ENCODE measurements at regions of chr12 and their contacts with region 1.

Region 1: GRCh38 chr12:57846577-57847319 is at the start of gene CTDSP2:
- DNase-seq: peak; percentile 94
- ATAC-seq: peak; percentile 43
- H3K4me3 Mint-ChIP-seq: peak within 1 kb of the TSS; percentile 78
- H3K27ac Mint-ChIP-seq: peak within 1 kb of the TSS; percentile 70
- H3K4me1 Mint-ChIP-seq: peaks cover 44% of the 10 kb centered on the region
- H3K27me3 Mint-ChIP-seq: peaks cover 5% of the 10 kb centered on the region
- total RNA-seq, gene CTDSP2: 80.9 to 85.4 TPM

Region 2: GRCh38 chr12:57782608-57783465 is 63.9 kb before region 1 on chr12 and contains the start of gene TSFM:
- CTCF ChIA-PET with region 1: interaction called, 7 read pairs
- POLR2A ChIA-PET with region 1: no interaction called
- intact Hi-C with region 1: loop called (anchors 1 to 5 kb)
- DNase-seq: peak; percentile 99
- ATAC-seq: peak; percentile 93
- H3K4me3 Mint-ChIP-seq: peak within 1 kb of the TSS; percentile 98
- H3K27ac Mint-ChIP-seq: peak within 1 kb of the TSS; percentile 98
- H3K4me1 Mint-ChIP-seq: peaks cover 35% of the 10 kb centered on the region
- H3K27me3 Mint-ChIP-seq: no peaks in the 10 kb centered on the region
- total RNA-seq, gene TSFM: 30.7 to 56.9 TPM

Region 3: GRCh38 chr12:57865090-57865751 is 18.5 kb after region 1 on chr12:
- CTCF ChIA-PET with region 1: interaction called, 21 read pairs
- POLR2A ChIA-PET with region 1: interaction called, 6 read pairs
- intact Hi-C with region 1: loop called in 1 of 2 experiments (anchors 2 kb)
- DNase-seq: peak; percentile 84
- ATAC-seq: peak; percentile 96
- H3K4me3 Mint-ChIP-seq: peak overlapping the region; percentile 66
- H3K27ac Mint-ChIP-seq: peak overlapping the region; percentile 74
- H3K4me1 Mint-ChIP-seq: peaks cover 7% of the 10 kb centered on the region
- H3K27me3 Mint-ChIP-seq: peaks cover 2% of the 10 kb centered on the region

Region 4: GRCh38 chr12:57875753-57876547 is 29.2 kb after region 1 on chr12:
- CTCF ChIA-PET with region 1: no interaction called
- POLR2A ChIA-PET with region 1: no interaction called
- intact Hi-C with region 1: no loop called
- DNase-seq: no peak
- ATAC-seq: peak; percentile 66
- H3K4me3 Mint-ChIP-seq: no peak overlapping the region
- H3K27ac Mint-ChIP-seq: no peak overlapping the region
- H3K4me1 Mint-ChIP-seq: peaks cover 10% of the 10 kb centered on the region
- H3K27me3 Mint-ChIP-seq: peaks cover 2% of the 10 kb centered on the region

Region 5: DNA sequence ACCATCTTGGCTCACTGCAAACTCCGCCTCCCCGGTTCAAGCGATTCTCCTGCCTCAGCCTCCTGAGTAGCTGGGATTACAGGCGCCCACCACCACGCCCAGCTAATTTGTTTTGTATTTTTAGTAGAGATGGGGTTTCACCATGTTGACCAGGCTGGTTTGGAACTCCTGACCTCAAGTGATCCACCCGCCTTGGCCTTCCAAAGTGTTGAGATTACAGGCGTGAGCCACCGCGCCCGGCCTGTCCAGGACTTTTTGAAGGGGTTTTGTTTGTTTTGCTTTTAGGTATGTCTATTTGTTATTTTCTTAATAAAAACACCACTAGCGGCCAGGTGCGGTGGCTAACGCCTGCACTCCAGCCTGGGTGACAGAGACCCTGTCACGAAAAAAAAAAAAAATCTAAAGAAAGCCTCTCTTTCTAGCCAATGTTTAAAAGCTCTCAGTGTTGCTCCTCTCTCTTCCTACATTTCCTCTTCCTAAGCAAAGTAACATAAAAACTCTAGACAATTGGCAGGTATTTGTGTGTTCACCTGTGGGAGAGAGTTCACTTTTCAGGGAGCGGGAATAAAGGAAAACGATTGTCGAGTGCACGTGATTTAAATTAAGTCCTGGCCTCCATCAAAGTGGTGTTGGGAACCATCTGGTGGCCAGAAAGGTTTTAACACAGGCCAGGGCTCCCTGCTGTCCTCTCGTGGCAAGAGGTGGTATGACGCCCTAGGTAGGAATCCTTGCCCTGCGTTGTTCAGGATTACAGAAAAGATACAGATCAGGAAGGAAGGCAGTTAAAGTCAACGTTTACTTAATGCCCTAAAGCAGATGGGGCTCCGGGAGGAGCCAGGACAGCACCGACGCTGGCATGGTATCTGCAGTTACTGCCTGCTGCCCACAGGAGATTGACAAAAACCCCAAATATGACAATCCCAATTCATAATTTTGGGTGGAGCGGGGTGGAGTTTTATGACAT is 58.4 kb after region 1 on chr12:
- CTCF ChIA-PET with region 1: interaction called, 15 read pairs
- POLR2A ChIA-PET with region 1: no interaction called
- intact Hi-C with region 1: no loop called
- DNase-seq: peak; percentile 91
- ATAC-seq: peak; percentile 98
- H3K4me3 Mint-ChIP-seq: peak overlapping the region; percentile 37
- H3K27ac Mint-ChIP-seq: no peak overlapping the region
- H3K4me1 Mint-ChIP-seq: peaks cover 3% of the 10 kb centered on the region
- H3K27me3 Mint-ChIP-seq: peaks cover 7% of the 10 kb centered on the region

Region 6: GRCh38 chr12:57941165-57941894 is 94.6 kb after region 1 on chr12 and contains the start of gene ATP23:
- CTCF ChIA-PET with region 1: interaction called, 3 read pairs
- POLR2A ChIA-PET with region 1: interaction called, 3 read pairs
- intact Hi-C with region 1: loop called (anchors 1 to 2 kb)
- DNase-seq: peak; percentile 94
- ATAC-seq: peak; percentile 90
- H3K4me3 Mint-ChIP-seq: peak within 1 kb of the TSS; percentile 77
- H3K27ac Mint-ChIP-seq: peak within 1 kb of the TSS; percentile 90
- H3K4me1 Mint-ChIP-seq: peaks cover 43% of the 10 kb centered on the region
- H3K27me3 Mint-ChIP-seq: no peaks in the 10 kb centered on the region
- total RNA-seq, gene ATP23: 17.8 to 17.9 TPM

Measured in activated CD4-positive, alpha-beta T cell treated with anti-CD3 and anti-CD28 coated beads for 36 hours (primary cell).